GM10248 (cell line): ENCODE measurements at regions of chr1 and their contacts with region 1.

Region 1: DNA sequence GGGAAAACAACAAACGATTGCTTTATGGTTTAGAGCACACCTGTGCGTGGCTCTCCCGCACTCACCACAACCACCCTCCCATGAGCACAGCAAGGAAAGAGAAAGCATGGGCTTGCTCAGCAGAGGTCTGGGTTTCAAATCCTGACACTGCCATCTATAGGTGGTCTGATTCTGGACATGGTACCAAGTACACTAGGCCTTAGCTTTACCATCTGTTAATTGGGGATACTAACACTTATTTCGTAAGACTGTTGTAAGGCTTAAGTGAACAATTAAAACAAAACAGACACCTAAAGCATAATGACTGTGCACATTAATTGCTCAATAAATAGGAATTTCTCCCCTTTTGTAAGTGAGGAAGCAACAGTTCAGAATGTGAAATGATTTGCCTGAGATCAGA is 50.1 kb downstream of the HIVEP3 start:
- DNase-seq: peak; percentile 69
- CTCF ChIP-seq: peak; percentile 63

Region 2: GRCh38 chr1:41891199-41891896 is 22.7 kb after region 1 on chr1:
- CTCF ChIA-PET with region 1: interaction called, 13 read pairs
- POLR2A ChIA-PET with region 1: no interaction called
- DNase-seq: peak; percentile 80
- CTCF ChIP-seq: peak; percentile 17